ENCODE measurements at regions of chr6 and their contacts with region 1.

Region 1: GRCh38 chr6:135535989-135536414 is 38.5 kb upstream of the AHI1 start:
- DNase-seq: peak; percentile 70
- H3K4me3 ChIP-seq: no peak overlapping the region
- H3K27ac ChIP-seq: no peak overlapping the region
- H3K4me1 ChIP-seq: peaks cover 10% of the 10 kb centered on the region
- H3K27me3 ChIP-seq: no peaks in the 10 kb centered on the region
- CTCF ChIP-seq: peak; percentile 41 to 43
- POLR2A ChIP-seq: no peak

Region 2: GRCh38 chr6:135546680-135547418 is 10.8 kb after region 1 on chr6:
- CTCF ChIA-PET with region 1: interaction called, 11 read pairs
- POLR2A ChIA-PET with region 1: no interaction called
- dilution Hi-C with region 1: no loop called
- intact Hi-C with region 1: no loop called
- DNase-seq: no peak
- H3K4me3 ChIP-seq: no peak overlapping the region
- H3K27ac ChIP-seq: no peak overlapping the region
- H3K4me1 ChIP-seq: no peaks in the 10 kb centered on the region
- H3K27me3 ChIP-seq: no peaks in the 10 kb centered on the region
- CTCF ChIP-seq: no peak
- POLR2A ChIP-seq: no peak

Region 3: DNA sequence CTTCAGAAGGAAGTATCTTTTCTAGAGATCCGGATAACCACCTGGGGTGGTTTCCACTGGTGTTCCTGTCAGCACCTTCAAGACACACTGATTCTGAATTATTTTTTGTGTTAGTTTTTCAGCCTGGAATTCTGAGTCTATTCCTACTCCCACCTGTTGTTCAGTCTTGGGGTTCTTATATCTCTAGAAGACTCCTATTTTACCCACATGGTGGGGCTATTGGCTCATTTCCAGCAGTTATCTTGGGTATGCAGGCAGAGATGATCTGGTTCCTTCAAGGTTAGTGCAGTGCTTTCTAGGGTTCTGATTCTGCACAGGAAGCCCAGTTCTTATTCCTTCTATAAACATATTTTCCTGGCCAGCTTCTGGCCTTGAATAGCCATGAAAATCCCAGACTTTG is 139.9 kb after region 1 on chr6:
- CTCF ChIA-PET with region 1: interaction called, 5 read pairs
- POLR2A ChIA-PET with region 1: no interaction called
- dilution Hi-C with region 1: no loop called
- intact Hi-C with region 1: loop called (anchors 5 kb)
- DNase-seq: peak; percentile 63
- H3K4me3 ChIP-seq: no peak overlapping the region
- H3K27ac ChIP-seq: no peak overlapping the region
- H3K4me1 ChIP-seq: no peaks in the 10 kb centered on the region
- H3K27me3 ChIP-seq: no peaks in the 10 kb centered on the region
- CTCF ChIP-seq: peak in 1 of 2 donors; percentile 8
- POLR2A ChIP-seq: no peak

Region 4: DNA sequence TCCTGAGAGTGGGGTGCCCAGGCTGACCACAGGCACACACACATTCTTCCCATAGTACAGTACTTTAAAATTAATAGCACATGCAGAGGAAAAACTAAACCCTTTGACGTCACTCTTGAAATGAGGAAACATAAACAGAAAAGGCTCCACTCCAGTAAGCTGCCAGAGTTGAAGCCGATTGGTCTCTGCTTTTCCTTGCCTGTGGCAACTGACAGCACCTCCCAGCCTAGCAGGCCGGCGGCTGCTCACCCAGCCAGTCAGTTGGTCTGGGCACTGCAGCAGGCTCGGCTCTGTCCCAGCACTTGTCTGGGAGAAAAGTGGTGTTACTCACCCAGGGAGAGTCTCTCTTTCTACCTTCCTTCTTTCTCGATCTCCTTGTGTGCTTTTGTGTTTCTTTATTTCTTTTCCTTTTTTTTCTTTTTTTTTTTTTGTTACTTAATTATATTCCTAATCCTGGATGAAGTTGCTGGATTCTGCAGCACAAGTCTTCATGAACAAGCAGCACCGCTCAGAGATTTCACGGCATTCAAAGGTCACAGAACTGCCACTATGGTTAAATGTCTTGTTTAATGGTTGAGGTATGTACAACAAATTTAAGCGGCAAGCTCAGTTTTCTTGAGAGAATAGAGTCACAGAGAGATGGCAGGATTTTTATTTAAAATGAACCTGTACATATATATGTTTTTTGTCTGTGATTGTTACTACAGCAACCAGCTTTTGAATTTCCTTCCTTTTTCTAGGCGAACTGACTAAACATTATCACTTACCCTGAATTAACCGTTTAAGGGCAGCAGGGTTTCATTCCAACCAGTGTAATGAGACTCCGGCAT is 315.7 kb after region 1 on chr6 and contains the start of gene PDE7B:
- CTCF ChIA-PET with region 1: interaction called, 4 read pairs
- POLR2A ChIA-PET with region 1: no interaction called
- dilution Hi-C with region 1: no loop called
- intact Hi-C with region 1: loop called (anchors 5 kb)
- DNase-seq: peak; percentile 89
- H3K4me3 ChIP-seq: peak within 1 kb of the TSS; percentile 10 to 58 (median 14)
- H3K27ac ChIP-seq: peak within 1 kb of the TSS; percentile 2
- H3K4me1 ChIP-seq: peaks cover 17% of the 10 kb centered on the region
- H3K27me3 ChIP-seq: peaks cover 0 to 8% of the 10 kb centered on the region in 2 experiments
- CTCF ChIP-seq: no peak
- POLR2A ChIP-seq: no peak
- total RNA-seq, gene PDE7B: 21.3 and 25.1 TPM in 2 replicates

Region 5: DNA sequence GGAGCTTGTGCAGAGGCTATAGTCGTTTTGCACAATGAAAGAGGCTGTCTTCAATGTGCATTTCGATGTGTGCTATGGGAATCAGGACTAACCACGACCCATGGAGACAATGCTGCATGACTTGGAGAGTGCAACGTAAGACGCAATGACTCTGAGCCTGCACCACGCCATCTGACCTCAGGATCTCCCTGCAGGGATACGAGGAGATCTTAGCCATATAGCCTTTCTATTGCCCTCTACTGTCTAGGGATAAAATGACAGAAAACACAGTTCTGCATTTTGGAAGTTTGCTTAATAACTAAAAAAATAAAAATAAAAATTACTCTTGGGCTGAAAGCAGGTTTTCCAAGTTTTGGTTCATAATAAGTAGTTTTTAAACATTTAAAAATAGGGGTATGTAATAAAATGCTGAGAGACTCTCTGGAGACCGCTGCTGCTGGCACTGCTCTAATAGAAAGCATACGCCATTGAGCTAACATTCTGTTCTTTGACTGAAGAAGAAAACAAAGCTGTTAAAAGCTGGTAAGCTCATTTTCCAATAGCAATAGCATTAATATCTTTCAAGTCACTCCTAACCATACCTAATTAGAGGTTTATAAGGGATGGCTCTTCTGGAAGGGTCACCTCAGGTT is 402.7 kb after region 1 on chr6:
- CTCF ChIA-PET with region 1: interaction called, 11 read pairs
- POLR2A ChIA-PET with region 1: no interaction called
- dilution Hi-C with region 1: no loop called
- intact Hi-C with region 1: no loop called
- DNase-seq: peak; percentile 14
- H3K4me3 ChIP-seq: no peak overlapping the region
- H3K27ac ChIP-seq: no peak overlapping the region
- H3K4me1 ChIP-seq: no peaks in the 10 kb centered on the region
- H3K27me3 ChIP-seq: no peaks in the 10 kb centered on the region
- CTCF ChIP-seq: peak; percentile 10 to 14
- POLR2A ChIP-seq: no peak

Region 6: GRCh38 chr6:136067731-136068341 is 531.8 kb after region 1 on chr6:
- CTCF ChIA-PET with region 1: interaction called, 4 read pairs
- POLR2A ChIA-PET with region 1: no interaction called
- dilution Hi-C with region 1: no loop called
- intact Hi-C with region 1: loop called (anchors 2 kb)
- DNase-seq: peak; percentile 95
- H3K4me3 ChIP-seq: peak overlapping the region in 1 of 3 experiments; percentile 21
- H3K27ac ChIP-seq: peak overlapping the region; percentile 100
- H3K4me1 ChIP-seq: peaks cover 48% of the 10 kb centered on the region
- H3K27me3 ChIP-seq: no peaks in the 10 kb centered on the region
- CTCF ChIP-seq: no peak
- POLR2A ChIP-seq: peak; percentile 24

Region 7: GRCh38 chr6:136317021-136317694 is 781.2 kb after region 1 on chr6:
- CTCF ChIA-PET with region 1: interaction called, 42 read pairs
- POLR2A ChIA-PET with region 1: no interaction called
- dilution Hi-C with region 1: no loop called
- intact Hi-C with region 1: loop called (anchors 1 kb)
- DNase-seq: peak; percentile 59
- H3K4me3 ChIP-seq: no peak overlapping the region
- H3K27ac ChIP-seq: no peak overlapping the region
- H3K4me1 ChIP-seq: no peaks in the 10 kb centered on the region
- H3K27me3 ChIP-seq: peaks cover 5 to 7% of the 10 kb centered on the region in 2 experiments
- CTCF ChIP-seq: peak; percentile 69 to 74
- POLR2A ChIP-seq: no peak